Heart left ventricle (tissue), 16 donors: ENCODE measurements at regions of chr9 and their contacts with region 1.

Region 1: DNA sequence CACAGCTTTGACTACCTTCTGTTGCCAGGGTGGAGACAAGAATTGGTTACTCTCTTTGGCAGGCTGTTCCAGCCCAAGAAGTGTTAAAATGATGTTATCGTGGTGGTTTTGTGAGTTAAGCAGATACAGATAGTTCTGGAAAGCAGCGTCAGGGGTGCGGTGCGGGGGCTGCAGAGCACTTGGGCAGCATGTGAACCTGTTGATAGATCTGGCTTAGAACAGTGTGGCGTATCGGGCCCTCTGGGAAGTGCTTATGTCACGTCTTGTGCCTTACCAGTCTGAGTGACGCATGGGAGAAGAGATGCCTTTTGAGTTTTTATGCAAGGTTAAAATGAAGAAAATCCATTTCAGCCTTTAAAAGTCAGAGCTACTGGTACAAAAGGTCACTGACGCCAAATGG is 152.5 kb downstream of the PRKACG start:
- DNase-seq: peak in 3 of 5 donors; percentile 36 to 85 (median 51)
- ATAC-seq: peak; percentile 91 to 99 (median 95)
- H3K4me3 ChIP-seq: no peak overlapping the region
- H3K27ac ChIP-seq: peak overlapping the region in 8 of 12 donors; percentile 7 to 52 (median 48)
- H3K4me1 ChIP-seq: peaks cover 0 to 28% (median 0%) of the 10 kb centered on the region in 12 donors
- H3K27me3 ChIP-seq: no peaks in the 10 kb centered on the region
- CTCF ChIP-seq: no peak
- POLR2A ChIP-seq: no peak

Region 2: GRCh38 chr9:68804911-68805889 is 56.2 kb before region 1 on chr9:
- intact Hi-C with region 1: loop called in 1 of 10 experiments (anchors 5 kb)
- DNase-seq: peak in 4 of 5 donors; percentile 16 to 57 (median 41)
- ATAC-seq: peak; percentile 93 to 96 (median 94)
- H3K4me3 ChIP-seq: peak overlapping the region in 1 of 12 donors; percentile 11
- H3K27ac ChIP-seq: peak overlapping the region in 11 of 12 donors; percentile 66 to 87 (median 80)
- H3K4me1 ChIP-seq: peaks cover 0 to 51% (median 23%) of the 10 kb centered on the region in 12 donors
- H3K27me3 ChIP-seq: no peaks in the 10 kb centered on the region
- CTCF ChIP-seq: no peak
- POLR2A ChIP-seq: no peak